Endothelial cell of umbilical vein (primary cell): ENCODE measurements at regions of chr2 and their contacts with region 1.

Region 1: DNA sequence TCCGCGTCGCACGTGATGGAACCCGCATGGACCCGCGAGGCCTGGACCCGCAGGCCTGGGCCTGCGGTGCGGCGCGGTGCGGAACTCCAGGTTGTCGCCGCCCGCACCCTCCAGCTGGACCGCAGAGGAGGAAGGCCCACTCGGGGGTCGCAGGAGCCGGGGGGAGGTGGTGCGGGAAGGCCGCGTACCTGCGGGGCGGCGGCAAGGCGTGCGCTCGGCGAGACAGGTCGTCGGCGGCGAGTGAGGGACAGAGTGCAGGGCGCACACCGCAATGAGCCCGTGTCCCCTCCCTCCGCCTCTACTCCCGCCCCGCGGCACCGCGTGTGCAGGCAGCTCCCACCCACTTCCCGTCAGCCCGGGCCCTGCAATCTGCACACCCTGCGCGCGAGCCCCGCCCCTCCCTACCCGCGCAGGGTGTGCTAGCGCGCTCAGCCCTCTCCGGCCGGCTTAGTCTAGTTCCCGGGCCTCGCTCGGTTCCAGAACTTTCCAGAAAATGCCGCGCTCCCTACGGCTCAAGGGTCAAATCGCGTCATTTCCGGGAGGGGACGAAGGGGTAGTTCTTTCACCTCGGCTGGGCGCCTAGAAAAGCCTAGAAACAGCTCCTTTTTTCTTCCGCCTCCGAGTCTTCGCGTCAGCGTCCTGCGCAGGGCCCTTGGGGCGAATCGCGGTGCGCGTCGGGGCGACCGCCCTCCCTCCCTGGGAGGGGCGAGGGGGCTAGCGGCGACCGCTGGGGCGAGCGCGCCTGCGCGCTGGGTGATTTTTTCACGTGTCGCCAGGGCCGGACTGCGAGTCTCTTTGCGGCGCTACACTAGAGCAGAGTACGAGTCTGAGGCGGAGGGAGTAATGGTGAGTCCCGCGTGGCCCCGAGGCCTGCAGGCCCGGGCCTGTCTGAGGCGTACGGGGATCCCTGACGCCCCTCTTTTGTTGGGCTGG is at the starts of genes HSPD1 and HSPE1:
- DNase-seq: peak; percentile 99
- H3K4me3 ChIP-seq: peak within 1 kb of the TSS; percentile 68 to 93 (median 86)
- H3K27ac ChIP-seq: peak within 1 kb of the TSS; percentile 75
- H3K4me1 ChIP-seq: peaks cover 46% of the 10 kb centered on the region
- H3K27me3 ChIP-seq: no peaks in the 10 kb centered on the region
- CTCF ChIP-seq: no peak
- POLR2A ChIP-seq: peak; percentile 82
- total RNA-seq, gene HSPD1: 307 and 337 TPM in 2 replicates
- total RNA-seq, gene HSPE1: 137 and 145 TPM in 2 replicates

Region 2: DNA sequence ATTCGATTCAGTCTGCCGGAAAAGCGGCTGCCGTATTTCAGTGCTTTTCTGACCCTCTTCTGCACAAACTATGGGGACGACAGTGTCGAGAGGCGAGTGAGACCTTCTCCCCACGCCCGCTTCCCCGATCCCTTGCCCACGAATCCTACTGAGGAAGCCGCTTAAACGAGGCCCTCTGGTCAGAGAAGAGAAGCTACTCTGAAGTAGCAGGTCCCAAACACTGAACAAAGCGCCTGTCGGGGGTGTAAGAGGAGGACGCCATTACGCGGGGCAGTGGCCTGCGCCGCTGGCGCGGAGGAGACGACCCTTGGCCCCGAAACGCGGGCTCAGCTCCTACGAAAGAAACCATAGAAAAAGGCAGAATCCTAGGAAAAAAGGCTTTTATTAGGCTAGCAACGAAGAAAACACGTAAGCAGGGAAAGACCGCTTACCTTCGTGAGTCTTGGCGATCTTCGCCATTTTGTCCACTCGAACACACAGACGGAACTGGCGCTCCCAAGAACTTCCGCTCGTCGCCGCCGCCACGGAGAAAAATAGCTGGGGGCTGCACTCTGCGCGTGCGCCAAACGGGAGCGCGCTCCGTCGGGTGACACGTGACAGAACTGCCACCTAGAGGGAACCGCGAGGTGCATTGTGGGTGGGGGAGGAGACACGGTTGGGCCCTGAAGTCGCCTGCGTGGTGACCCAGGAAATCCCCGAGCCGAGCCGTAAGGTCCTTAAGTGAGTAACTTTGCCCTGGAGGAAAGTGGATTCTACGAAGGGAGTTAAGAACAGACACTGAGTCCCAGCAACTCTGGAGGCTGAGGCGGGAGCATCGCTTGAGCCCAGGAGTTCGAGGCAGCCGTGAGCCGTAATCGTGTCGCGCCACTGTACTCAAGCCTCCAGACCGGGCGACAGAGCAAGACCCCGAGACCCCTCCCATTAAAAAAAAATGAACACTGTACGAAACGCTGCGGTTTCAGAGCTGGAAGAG is 65.0 kb before region 1 on chr2 and contains the start of gene SF3B1:
- CTCF ChIA-PET with region 1: interaction called, 6 read pairs
- POLR2A ChIA-PET with region 1: interaction called, 7 read pairs
- dilution Hi-C with region 1: no loop called
- intact Hi-C with region 1: loop called (anchors 1 kb)
- DNase-seq: peak; percentile 99
- H3K4me3 ChIP-seq: peak within 1 kb of the TSS; percentile 67 to 100 (median 99)
- H3K27ac ChIP-seq: peak within 1 kb of the TSS; percentile 96
- H3K4me1 ChIP-seq: peaks cover 19% of the 10 kb centered on the region
- H3K27me3 ChIP-seq: no peaks in the 10 kb centered on the region
- CTCF ChIP-seq: peak in 1 of 2 donors; percentile 3
- POLR2A ChIP-seq: peak; percentile 95
- total RNA-seq, gene SF3B1: 222 and 234 TPM in 2 replicates

Region 3: GRCh38 chr2:197515739-197516392 is 16.0 kb after region 1 on chr2 and contains the start of gene MOB4:
- CTCF ChIA-PET with region 1: interaction called, 4 read pairs
- POLR2A ChIA-PET with region 1: interaction called, 13 read pairs
- dilution Hi-C with region 1: no loop called
- intact Hi-C with region 1: loop called (anchors 1 kb)
- DNase-seq: peak; percentile 97
- H3K4me3 ChIP-seq: peak within 1 kb of the TSS; percentile 38 to 81 (median 71)
- H3K27ac ChIP-seq: peak within 1 kb of the TSS; percentile 78
- H3K4me1 ChIP-seq: peaks cover 17% of the 10 kb centered on the region
- H3K27me3 ChIP-seq: no peaks in the 10 kb centered on the region
- CTCF ChIP-seq: no peak
- POLR2A ChIP-seq: peak; percentile 94
- total RNA-seq, gene MOB4: 24.0 and 27.9 TPM in 2 replicates

Region 4: DNA sequence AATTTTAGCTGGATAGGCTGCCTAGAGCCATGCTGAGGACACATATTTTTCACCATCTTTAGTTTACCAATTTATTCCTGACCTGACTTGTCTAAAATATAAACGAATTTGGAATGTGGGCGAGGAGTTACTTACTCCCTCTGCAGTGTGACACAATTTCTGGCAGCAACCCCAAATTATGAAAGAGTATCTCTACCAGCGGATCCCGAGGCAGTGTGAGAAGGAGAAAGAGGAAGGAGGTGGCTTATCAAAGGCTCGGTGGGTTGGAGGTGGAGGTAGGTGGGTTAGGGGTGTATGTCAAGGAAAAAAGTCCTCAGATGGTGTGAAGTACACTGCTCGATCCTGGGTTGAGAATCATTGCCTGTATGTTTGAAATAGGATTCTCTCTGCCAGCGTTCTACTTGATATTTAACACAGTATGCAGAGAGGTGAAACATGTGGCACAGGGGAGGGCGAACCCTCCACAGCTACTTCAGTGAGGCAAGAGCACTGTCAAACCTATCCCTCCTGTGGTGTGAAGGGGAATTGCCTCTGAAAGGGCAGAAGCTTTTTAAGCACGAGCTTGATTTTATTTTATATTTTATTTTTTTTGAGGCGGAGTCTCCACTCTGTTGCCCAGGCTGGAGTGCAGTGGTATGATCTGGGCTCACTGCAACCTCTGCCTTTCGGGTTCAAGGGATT is 99.6 kb after region 1 on chr2:
- CTCF ChIA-PET with region 1: interaction called, 3 read pairs
- POLR2A ChIA-PET with region 1: no interaction called
- dilution Hi-C with region 1: no loop called
- intact Hi-C with region 1: loop called (anchors 2 kb)
- DNase-seq: peak; percentile 9
- H3K4me3 ChIP-seq: no peak overlapping the region
- H3K27ac ChIP-seq: no peak overlapping the region
- H3K4me1 ChIP-seq: no peaks in the 10 kb centered on the region
- H3K27me3 ChIP-seq: no peaks in the 10 kb centered on the region
- CTCF ChIP-seq: peak in 1 of 2 donors; percentile 12
- POLR2A ChIP-seq: no peak

Region 5: GRCh38 chr2:197777823-197778407 is 278.1 kb after region 1 on chr2:
- CTCF ChIA-PET with region 1: interaction called, 3 read pairs
- POLR2A ChIA-PET with region 1: no interaction called
- dilution Hi-C with region 1: no loop called
- intact Hi-C with region 1: loop called (anchors 1 kb)
- DNase-seq: peak; percentile 58
- H3K4me3 ChIP-seq: no peak overlapping the region
- H3K27ac ChIP-seq: no peak overlapping the region
- H3K4me1 ChIP-seq: no peaks in the 10 kb centered on the region
- H3K27me3 ChIP-seq: no peaks in the 10 kb centered on the region
- CTCF ChIP-seq: peak; percentile 28 to 32
- POLR2A ChIP-seq: no peak